Gastrocnemius medialis (tissue), 4 donors: ENCODE measurements at regions of chr3 and their contacts with region 1.

Region 1: DNA sequence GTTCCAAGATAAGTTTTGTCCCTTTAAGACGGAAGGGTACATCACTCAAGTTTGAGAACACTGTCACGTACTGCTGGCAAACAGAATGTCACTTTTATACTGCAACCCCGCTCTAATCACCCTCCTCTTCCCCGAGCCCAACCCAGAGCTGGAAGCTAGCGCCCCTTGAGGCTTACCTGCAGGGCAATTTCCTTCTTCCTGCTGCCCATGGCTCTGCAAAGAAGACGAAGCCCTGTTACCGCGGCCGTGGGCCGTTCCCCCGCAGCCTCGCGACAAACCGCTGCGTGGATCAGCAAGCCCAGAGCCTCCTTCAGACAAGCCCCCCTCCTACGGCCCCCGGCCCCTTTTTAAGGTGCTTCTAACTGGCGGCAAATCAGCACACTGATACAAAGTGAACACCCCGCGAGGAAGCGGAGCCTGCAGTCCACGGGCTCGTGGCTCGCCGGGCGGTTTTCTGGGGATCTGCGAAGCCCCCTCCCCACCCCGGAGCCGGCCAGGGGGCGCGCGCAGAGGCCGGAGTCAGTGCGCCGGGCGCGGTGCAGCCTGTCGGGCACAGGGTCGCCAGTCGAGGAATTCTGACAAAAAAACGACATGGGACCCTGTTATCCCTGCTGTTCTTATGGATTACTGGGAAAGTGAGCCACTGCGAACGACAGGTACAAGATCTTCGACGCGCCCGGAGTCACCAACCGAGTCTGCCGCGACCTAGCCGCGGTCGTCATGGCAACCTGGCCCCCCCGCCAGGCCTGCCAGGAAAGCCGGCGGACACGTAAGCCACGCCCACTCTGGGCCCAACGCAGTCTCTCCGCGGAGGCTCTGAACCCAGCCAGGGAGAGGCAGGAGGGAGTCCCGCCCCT is at the start of gene NME9:
- DNase-seq: peak; percentile 79 to 87
- ATAC-seq: peak; percentile 69 to 70
- H3K4me3 ChIP-seq: peak within 1 kb of the TSS; percentile 68 to 89 (median 74)
- H3K27ac ChIP-seq: peak within 1 kb of the TSS; percentile 76 to 84 (median 80)
- H3K4me1 ChIP-seq: peaks cover 23 to 39% of the 10 kb centered on the region in 2 donors
- H3K27me3 ChIP-seq: no peaks in the 10 kb centered on the region
- CTCF ChIP-seq: peak; percentile 22 to 79 (median 41)
- POLR2A ChIP-seq: peak in 1 of 2 donors; percentile 9
- total RNA-seq, gene NME9: 0.38 to 7.3 (median 2.0) TPM in 3 of 4 donors, not detected in the other

Region 2: GRCh38 chr3:138186803-138187295 is 142.5 kb before region 1 on chr3:
- in situ Hi-C with region 1: loop called in 1 of 4 experiments (anchors 25 kb)
- intact Hi-C with region 1: loop called (anchors 5 kb)
- DNase-seq: peak; percentile 81 to 91
- ATAC-seq: peak; percentile 26 to 35
- H3K4me3 ChIP-seq: peak overlapping the region; percentile 72 to 99 (median 92)
- H3K27ac ChIP-seq: peak overlapping the region; percentile 92 to 99 (median 98)
- H3K4me1 ChIP-seq: peaks cover 36 to 38% of the 10 kb centered on the region in 2 donors
- H3K27me3 ChIP-seq: no peaks in the 10 kb centered on the region
- CTCF ChIP-seq: no peak
- POLR2A ChIP-seq: no peak

Region 3: DNA sequence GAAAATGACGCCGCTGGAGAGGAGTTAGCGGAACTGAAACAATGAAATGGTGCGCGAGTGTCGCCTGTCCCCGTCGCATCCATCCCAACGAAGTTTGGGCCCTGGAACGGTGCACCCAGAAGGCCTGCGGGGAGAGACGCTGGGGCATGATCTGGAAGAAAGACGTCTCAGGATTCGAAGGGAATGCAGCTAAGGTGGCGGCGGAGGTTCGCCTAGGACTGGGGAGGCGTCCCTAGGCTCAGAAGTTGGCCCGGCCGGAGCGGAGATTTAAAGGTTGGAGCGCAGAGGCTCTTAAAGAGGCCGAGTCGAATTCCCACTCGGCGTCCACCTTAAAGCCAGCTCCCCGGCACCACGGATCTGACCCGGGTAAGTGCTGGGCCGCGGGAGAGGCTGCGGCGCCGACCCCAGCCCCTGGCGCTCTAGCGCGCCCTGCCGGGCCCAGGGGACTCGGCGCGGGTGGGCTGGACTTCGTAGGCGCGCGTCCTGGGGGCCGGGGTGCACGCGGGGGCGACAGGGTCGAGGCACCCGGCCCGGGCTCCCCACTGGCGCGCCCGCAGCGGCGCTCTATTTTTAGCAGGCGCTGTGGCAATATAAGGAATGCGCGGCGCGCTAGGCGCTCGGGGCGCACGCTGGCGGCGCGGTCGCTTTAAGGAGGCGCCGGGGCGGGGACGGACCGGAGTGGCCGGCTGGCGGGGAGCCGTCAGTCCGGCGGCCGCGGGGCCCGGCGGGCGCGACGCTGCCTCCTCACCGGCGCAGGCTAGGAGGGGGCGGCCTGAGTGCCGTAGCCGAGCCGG is 18.8 kb after region 1 on chr3 and contains the start of gene MRAS:
- in situ Hi-C with region 1: no loop called
- intact Hi-C with region 1: loop called (anchors 1 kb)
- DNase-seq: peak; percentile 73 to 88
- ATAC-seq: peak; percentile 57 to 76
- H3K4me3 ChIP-seq: peak within 1 kb of the TSS; percentile 63 to 87 (median 74)
- H3K27ac ChIP-seq: peak within 1 kb of the TSS; percentile 93 to 98 (median 97)
- H3K4me1 ChIP-seq: peaks cover 37 to 41% of the 10 kb centered on the region in 2 donors
- H3K27me3 ChIP-seq: no peaks in the 10 kb centered on the region
- CTCF ChIP-seq: peak; percentile 21 to 65 (median 51)
- POLR2A ChIP-seq: peak; percentile 94 to 98
- total RNA-seq, gene MRAS: 45.8 to 149 (median 57.7) TPM

Region 4: GRCh38 chr3:138397983-138398382 is 68.6 kb after region 1 on chr3:
- in situ Hi-C with region 1: loop called in 1 of 4 experiments (anchors 10 kb)
- intact Hi-C with region 1: loop called (anchors 2 kb)
- DNase-seq: no peak
- ATAC-seq: peak in 1 of 2 donors; percentile 49
- H3K4me3 ChIP-seq: no peak overlapping the region
- H3K27ac ChIP-seq: peak overlapping the region in 1 of 4 donors; percentile 34
- H3K4me1 ChIP-seq: peaks cover 38 to 49% of the 10 kb centered on the region in 2 donors
- H3K27me3 ChIP-seq: no peaks in the 10 kb centered on the region
- CTCF ChIP-seq: peak in 3 of 5 experiments; percentile 26 to 33 (median 32)
- POLR2A ChIP-seq: no peak

Region 5: DNA sequence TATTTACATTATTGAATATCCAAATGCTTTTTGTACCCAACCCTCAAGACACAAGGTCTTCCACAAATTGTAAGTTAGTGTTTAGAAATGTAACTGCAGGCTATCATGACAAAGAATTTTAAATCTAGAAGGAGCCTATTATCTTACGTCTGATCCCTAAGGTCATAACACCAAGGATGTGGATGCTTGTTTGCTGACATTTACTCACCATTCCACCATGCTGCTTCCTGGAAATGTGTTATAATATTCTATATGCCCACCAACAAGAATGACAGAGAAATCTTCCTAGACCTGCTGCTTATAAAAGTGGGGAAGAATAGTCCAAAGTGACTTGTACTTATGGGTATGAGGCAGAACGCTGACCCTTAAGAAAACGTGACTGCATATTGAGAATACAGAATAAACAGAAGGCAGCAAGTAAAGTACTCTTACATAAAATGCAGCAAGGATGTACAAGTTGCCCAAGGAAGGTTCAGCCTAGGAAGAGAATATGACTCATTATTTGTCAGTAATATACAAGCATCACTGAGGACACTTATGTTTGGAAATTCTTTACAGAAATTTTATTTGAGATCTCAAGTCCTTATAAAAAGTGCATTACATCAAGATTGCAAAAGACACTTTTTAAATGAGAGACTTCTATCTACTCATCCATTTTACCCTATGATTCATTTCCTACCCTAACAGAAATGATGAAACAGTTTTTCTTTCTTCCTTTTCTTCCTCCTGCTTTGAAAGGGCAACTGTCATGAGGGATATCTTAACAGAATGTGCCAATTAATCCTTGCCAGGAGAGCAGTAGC is 164.7 kb after region 1 on chr3:
- in situ Hi-C with region 1: no loop called
- intact Hi-C with region 1: loop called (anchors 5 kb)
- DNase-seq: no peak
- ATAC-seq: peak; percentile 95
- H3K4me3 ChIP-seq: no peak overlapping the region
- H3K27ac ChIP-seq: peak overlapping the region; percentile 71 to 85 (median 82)
- H3K4me1 ChIP-seq: peaks cover 36 to 38% of the 10 kb centered on the region in 2 donors
- H3K27me3 ChIP-seq: no peaks in the 10 kb centered on the region
- CTCF ChIP-seq: no peak
- POLR2A ChIP-seq: no peak

Region 6: DNA sequence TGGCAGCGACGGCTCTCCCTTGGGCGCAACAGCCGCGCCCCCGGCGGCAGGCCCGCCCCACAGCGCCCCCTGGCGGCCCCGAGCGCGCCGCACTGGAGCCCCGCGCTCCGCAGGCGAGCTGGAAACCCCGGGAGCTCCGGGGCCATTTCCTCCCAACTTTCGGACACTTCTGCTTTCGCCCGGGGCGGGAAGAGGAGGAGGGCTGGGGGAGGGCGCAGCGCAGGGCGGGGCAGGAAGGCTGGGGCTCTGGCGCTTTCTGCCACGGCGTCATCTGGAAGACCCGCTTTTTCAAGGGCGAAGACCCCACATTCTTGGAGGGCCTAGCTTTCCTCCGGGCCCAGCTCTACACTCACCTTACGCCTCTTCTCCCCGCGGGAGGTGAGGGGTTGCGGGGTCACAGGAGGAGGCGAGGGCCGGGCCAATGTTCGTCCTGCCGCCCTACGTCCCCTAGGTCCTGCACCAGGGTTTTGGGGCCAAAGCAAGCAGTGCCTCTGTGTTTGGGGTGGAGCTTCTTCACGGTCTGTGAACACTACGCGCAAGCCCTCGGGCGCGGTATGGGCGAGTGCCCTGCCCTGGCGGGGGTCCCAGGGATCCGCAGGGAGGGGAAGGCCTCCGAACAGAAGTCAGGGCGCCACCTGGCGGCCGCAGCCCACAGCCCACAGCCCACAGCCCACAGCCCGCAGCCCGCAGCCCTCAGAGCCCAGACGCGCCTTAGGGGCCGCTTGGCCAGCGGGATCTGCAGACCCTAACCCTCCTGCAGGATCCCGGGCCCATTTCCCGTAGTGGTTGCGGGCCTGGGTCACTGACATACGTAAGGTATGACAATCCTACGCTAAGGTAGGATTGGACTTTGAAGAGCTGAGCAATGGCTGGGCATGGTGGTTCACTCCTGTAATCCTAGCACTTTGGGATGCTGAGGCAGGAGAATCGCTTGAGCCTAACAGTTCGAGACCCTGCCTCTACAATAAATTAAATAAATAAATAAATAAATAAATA is 586.4 kb after region 1 on chr3:
- in situ Hi-C with region 1: loop called in 1 of 4 experiments (anchors 25 kb)
- intact Hi-C with region 1: no loop called
- DNase-seq: peak; percentile 82 to 94
- ATAC-seq: peak; percentile 91 to 93
- H3K4me3 ChIP-seq: peak overlapping the region; percentile 80 to 98 (median 87)
- H3K27ac ChIP-seq: peak overlapping the region; percentile 92 to 95 (median 94)
- H3K4me1 ChIP-seq: peaks cover 3 to 4% of the 10 kb centered on the region in 2 donors
- H3K27me3 ChIP-seq: no peaks in the 10 kb centered on the region
- CTCF ChIP-seq: peak; percentile 86 to 94 (median 89)
- POLR2A ChIP-seq: no peak